ENCODE measurements at regions of chr9 and their contacts with region 1.

Region 1: DNA sequence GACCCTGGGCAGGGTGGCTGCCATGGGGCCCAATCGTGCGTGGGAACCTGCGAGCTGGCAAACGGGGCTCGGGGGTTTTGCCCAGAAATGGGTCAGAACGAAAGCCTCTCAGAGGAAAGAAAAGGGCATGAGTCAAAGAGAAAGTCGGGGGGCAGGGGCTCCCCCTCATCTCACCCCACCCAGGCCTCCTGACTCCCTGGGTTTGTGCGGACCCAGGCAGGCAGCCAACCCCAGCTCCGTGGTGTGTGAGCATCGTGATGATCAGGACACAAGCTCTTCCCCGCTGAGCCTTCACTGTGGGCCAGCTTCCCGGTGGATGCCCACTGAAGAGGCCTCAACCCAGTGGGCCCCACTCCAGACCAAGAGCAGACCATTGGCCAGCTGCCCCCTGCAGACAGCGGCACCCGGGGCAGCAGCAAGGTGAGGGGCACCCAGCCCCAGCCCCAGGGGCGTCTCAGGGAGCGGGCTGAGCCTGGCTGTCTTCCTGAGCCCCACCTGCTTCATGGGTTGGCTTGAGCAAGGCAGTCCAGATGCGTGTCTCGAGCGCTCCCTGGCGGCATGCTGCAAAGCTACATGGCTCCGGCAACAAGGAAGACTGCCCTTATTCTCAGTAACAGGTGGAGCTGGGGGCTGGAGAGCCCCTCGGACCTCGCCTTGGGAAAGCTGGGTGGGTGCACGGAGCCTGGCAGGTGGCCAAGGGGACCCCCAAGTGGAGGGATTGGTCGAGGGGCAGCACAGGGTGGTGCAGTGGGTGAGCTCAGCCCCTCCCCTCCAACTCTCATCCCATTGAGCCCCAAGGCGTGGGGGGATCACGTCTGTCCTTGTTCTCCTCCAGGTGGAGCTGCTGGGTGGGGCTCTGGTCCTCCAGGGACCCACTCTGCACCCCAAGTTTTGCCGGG is 3.2 kb upstream of the FUT7 start:
- DNase-seq: peak; percentile 73 to 94
- H3K4me3 ChIP-seq: no peak overlapping the region; a peak in 1 of 8 replicates
- H3K27ac ChIP-seq: no peak overlapping the region
- H3K4me1 ChIP-seq: peaks cover 0 to 2% (median 0%) of the 10 kb centered on the region in 4 experiments; a peak in 3 of 7 replicates
- H3K27me3 ChIP-seq: no peaks in the 10 kb centered on the region; a peak in 3 of 7 replicates
- CTCF ChIP-seq: peak in 2 of 3 experiments; percentile 93 to 95; a peak in 3 of 4 replicates
- EP300 ChIP-seq: no peak
- POLR2A ChIP-seq: no peak
- RAD21 ChIP-seq: peak; percentile 87 to 90

Region 2: GRCh38 chr9:136849038-136849959 is 185.8 kb before region 1 on chr9 and contains the start of gene PHPT1:
- CTCF ChIA-PET with region 1: interaction called, 12 read pairs
- POLR2A ChIA-PET with region 1: no interaction called
- DNase-seq: peak; percentile 98
- H3K4me3 ChIP-seq: peak within 1 kb of the TSS; percentile 81 to 89 (median 84)
- H3K27ac ChIP-seq: peak within 1 kb of the TSS; percentile 90
- H3K4me1 ChIP-seq: peaks cover 0 to 18% (median 8%) of the 10 kb centered on the region in 4 experiments; a peak in 5 of 7 replicates
- H3K27me3 ChIP-seq: peaks cover 2 to 12% (median 7%) of the 10 kb centered on the region in 4 experiments; a peak in 6 of 7 replicates
- CTCF ChIP-seq: no peak
- EP300 ChIP-seq: no peak
- POLR2A ChIP-seq: peak in 1 of 2 experiments; percentile 99; a peak in 2 of 3 replicates
- RAD21 ChIP-seq: no peak
- total RNA-seq, gene PHPT1: 109 and 111 TPM in 2 replicates

Region 3: DNA sequence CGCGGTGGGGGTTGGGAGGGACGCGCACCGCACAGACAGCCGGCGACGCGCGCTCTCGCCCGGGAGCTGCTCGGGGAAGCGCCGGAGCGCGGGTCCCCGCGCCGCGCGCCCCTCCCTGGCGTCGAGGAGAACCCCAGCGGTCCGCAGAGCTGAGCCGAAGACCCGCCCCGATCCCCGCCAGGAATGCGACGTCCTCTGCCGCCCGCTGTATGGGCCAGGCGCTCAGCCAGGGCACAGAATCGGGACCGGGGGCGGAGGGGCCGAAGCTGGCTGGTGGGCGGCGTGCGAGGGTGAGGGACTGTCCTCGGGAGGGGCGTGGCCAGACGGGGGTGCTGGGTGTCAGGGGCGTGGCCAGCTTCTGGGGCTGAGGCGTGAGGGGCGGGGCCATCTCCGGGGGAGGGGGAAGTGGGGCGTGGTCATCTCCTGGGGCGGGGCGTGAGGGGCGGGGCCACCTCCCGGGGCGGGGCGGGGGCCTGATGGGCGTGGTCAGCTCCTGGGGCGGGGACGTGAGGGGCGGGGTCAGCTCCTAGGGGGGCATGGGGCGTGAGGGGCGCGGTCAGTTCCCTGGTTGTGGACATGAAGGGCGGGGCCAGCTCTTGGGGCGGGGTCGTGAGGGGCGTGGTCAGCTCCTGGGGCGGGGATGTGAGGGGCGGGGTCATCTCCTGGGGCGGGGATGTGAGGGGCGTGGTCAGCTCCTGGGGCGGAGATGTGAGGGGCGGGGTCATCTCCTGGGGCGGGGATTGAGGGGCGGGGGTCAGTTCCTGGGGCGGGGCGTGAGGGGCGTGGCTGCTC is 56.8 kb before region 1 on chr9:
- CTCF ChIA-PET with region 1: interaction called, 41 read pairs
- POLR2A ChIA-PET with region 1: no interaction called
- DNase-seq: peak; percentile 68 to 98
- H3K4me3 ChIP-seq: peak overlapping the region; percentile 43 to 73 (median 52)
- H3K27ac ChIP-seq: no peak overlapping the region
- H3K4me1 ChIP-seq: peaks cover 0 to 12% (median 5%) of the 10 kb centered on the region in 4 experiments; a peak in 5 of 7 replicates
- H3K27me3 ChIP-seq: peaks cover 0 to 5% (median 2%) of the 10 kb centered on the region in 4 experiments; a peak in 2 of 7 replicates
- CTCF ChIP-seq: no peak
- EP300 ChIP-seq: no peak
- POLR2A ChIP-seq: no peak
- RAD21 ChIP-seq: no peak

Region 4: GRCh38 chr9:137007108-137007815 is 27.9 kb before region 1 on chr9:
- CTCF ChIA-PET with region 1: interaction called, 21 read pairs
- POLR2A ChIA-PET with region 1: no interaction called
- DNase-seq: no peak
- H3K4me3 ChIP-seq: no peak overlapping the region
- H3K27ac ChIP-seq: no peak overlapping the region
- H3K4me1 ChIP-seq: no peaks in the 10 kb centered on the region; a peak in 1 of 7 replicates
- H3K27me3 ChIP-seq: no peaks in the 10 kb centered on the region
- CTCF ChIP-seq: no peak
- EP300 ChIP-seq: no peak
- POLR2A ChIP-seq: no peak
- RAD21 ChIP-seq: no peak

Region 5: DNA sequence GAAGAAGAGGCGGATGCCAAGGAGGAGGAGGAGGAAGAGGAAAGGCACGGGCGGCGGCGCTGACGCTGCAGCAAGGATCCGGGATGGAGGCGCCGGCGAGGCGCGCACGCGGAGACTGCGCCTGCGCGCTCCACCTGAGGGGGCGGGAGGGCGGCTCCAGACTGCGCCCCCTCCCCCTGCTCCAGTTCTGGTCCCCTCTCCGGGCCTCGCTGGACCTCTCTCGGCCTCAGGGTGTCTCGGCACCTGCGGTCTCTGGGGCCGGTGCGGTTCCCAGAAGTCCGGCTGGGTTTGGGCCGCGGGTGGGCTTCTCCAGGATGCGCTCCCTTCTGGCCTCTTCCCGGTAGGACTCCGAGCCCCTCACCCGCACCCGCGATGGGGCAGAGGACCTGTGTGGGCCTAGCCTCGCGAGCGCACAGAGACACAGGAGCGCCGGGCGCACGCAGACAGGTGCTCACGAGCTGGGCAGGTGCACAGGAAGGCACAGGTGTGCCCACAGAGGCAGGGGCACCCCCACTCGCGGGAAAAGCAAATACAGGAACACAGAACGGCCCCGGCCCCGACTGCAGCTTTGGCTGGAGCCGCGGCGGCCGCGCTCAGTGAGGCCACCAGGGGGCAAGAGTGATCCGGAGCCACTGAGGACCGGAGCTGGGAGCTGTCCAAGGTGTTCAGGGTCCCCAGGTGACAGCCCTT is 11.1 kb after region 1 on chr9 and contains the start of gene NPDC1:
- CTCF ChIA-PET with region 1: interaction called, 27 read pairs
- POLR2A ChIA-PET with region 1: interaction called, 5 read pairs
- DNase-seq: peak; percentile 59 to 99
- H3K4me3 ChIP-seq: peak within 1 kb of the TSS; percentile 38 to 62 (median 56)
- H3K27ac ChIP-seq: no peak within 1 kb of the TSS
- H3K4me1 ChIP-seq: peaks cover 3 to 14% (median 8%) of the 10 kb centered on the region in 4 experiments; a peak in 6 of 7 replicates
- H3K27me3 ChIP-seq: peaks cover 17 to 51% (median 37%) of the 10 kb centered on the region in 4 experiments
- CTCF ChIP-seq: peak in 2 of 3 experiments; percentile 85 to 94; a peak in 3 of 4 replicates
- EP300 ChIP-seq: peak in 1 of 2 experiments; percentile 56; a peak in 1 of 3 replicates
- POLR2A ChIP-seq: no peak
- RAD21 ChIP-seq: peak; percentile 63 to 76
- total RNA-seq, gene NPDC1: 41.9 and 44.1 TPM in 2 replicates

Region 6: DNA sequence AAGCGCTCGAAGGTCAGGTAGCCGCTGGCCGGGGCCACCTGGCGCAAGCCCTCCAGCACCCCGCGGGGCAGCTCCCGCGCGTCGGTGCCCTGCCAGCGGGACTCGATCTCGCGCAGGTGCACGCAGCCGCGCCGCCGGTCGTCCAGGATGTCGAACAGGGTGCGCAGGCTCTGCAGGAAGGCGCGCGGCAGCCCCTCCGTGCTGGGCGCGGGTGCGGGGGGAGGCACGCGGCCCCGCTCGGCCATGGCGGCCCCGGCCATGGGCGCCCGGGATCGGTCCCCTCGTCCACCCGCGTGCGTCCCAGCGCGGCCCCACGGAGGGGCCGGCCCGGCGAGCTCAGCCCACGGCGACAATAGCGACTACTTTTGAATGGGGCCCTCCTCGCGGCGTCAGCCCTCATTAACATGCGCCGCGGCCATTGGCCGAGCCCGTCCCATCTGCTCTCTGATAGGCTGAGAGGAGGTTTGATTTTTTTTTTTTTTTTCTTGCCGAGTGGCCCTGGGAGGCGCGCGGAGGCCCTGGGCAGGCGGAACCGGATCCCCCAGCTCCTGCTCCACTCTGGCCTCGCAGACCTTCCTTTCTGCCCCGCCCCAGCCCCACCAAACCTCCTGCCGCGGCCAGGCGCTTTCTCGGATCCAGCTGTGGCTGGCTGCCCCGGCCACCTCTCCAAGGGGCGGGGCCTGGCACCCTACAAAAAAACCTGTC is 35.2 kb after region 1 on chr9 and contains the start of gene SAPCD2:
- CTCF ChIA-PET with region 1: interaction called, 110 read pairs
- POLR2A ChIA-PET with region 1: no interaction called
- DNase-seq: peak; percentile 75 to 84
- H3K4me3 ChIP-seq: peak within 1 kb of the TSS; percentile 46 to 64 (median 48)
- H3K27ac ChIP-seq: no peak within 1 kb of the TSS; the same call in 1 of the 2 replicates
- H3K4me1 ChIP-seq: peaks cover 0 to 27% (median 21%) of the 10 kb centered on the region in 4 experiments; a peak in 6 of 7 replicates
- H3K27me3 ChIP-seq: peaks cover 0 to 18% (median 7%) of the 10 kb centered on the region in 4 experiments; a peak in 5 of 7 replicates
- CTCF ChIP-seq: no peak
- EP300 ChIP-seq: 0 out of 3 replicates have a peak, but pooled peaks of 1 of the 2 experiments have one; percentile 18
- POLR2A ChIP-seq: peak in 1 of 2 experiments; percentile 49; a peak in 1 of 3 replicates
- RAD21 ChIP-seq: no peak
- total RNA-seq, gene SAPCD2: 30.3 and 32.1 TPM in 2 replicates

Region 7: GRCh38 chr9:137223078-137223970 is 188.2 kb after region 1 on chr9:
- CTCF ChIA-PET with region 1: no interaction called
- POLR2A ChIA-PET with region 1: no interaction called
- DNase-seq: peak; percentile 96 to 99
- H3K4me3 ChIP-seq: peak overlapping the region; percentile 67 to 92 (median 79)
- H3K27ac ChIP-seq: no peak overlapping the region
- H3K4me1 ChIP-seq: peaks cover 0 to 20% (median 10%) of the 10 kb centered on the region in 4 experiments; a peak in 5 of 7 replicates
- H3K27me3 ChIP-seq: no peaks in the 10 kb centered on the region; a peak in 2 of 7 replicates
- CTCF ChIP-seq: no peak
- EP300 ChIP-seq: no peak
- POLR2A ChIP-seq: peak in 1 of 2 experiments; percentile 53; a peak in 1 of 3 replicates
- RAD21 ChIP-seq: no peak

Measured in H1 (cell line).